BJ (cell line): ENCODE measurements at regions of chr2 and their contacts with region 1.

Region 1: DNA sequence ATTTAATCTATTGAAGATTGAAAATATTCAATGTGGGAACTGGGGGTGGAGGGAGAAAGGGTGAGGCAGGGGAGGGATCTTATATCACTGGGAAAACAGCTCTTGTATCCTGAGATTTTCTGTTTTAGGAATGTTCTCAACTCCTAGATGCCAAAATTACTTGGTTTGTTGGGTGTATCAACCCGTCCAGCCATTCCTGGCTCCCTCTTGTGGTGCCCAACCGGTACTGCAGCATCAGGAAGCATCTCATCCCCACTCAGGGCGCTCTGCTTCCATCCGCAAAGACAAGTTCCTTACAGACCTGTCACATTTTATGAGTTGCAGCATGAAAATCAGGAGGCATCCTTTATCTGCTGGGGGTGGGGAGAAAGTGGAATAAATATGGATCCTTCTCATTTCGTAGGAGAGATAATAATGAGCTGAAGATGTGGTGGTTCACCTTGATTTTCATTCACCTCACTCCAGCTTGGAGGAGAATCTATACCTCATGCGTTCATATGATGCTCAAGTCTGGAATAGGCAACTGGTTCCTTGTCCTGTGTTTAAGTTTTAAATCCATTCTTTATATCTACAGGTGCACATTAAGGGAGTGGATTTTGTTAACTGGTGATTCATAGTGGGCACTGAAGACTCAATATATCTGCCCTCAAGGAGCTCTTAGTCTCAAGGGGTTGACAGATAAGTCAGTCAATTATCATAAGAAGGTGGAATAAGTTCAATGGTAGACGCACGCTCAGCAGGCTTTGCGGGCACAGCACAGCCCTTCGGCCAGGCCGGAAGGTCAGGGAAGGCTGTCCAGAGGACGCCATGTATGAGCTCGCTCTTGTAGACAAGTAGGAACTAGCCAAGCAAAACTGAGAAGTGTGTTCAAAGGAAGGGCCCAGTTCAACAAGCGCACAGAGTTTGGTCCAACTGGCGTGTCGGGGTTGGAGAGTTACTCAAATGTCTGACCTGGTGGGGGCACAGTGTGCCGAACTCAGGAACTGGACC is 127.3 kb downstream of the RNF144A start:
- DNase-seq: no peak
- H3K4me3 ChIP-seq: no peak overlapping the region
- H3K27me3 ChIP-seq: no peaks in the 10 kb centered on the region
- CTCF ChIP-seq: peak; percentile 94

Region 2: GRCh38 chr2:6880200-6880733 is 164.3 kb before region 1 on chr2:
- CTCF ChIA-PET with region 1: no interaction called
- POLR2A ChIA-PET with region 1: no interaction called
- DNase-seq: no peak
- H3K4me3 ChIP-seq: no peak overlapping the region
- H3K27me3 ChIP-seq: peaks cover 1% of the 10 kb centered on the region; the same call in 1 of the 2 replicates
- CTCF ChIP-seq: no peak

Region 3: GRCh38 chr2:6896930-6897759 is 147.4 kb before region 1 on chr2:
- CTCF ChIA-PET with region 1: interaction called, 16 read pairs
- POLR2A ChIA-PET with region 1: no interaction called
- DNase-seq: no peak
- H3K4me3 ChIP-seq: no peak overlapping the region
- H3K27me3 ChIP-seq: no peaks in the 10 kb centered on the region
- CTCF ChIP-seq: peak; percentile 47

Region 4: GRCh38 chr2:7031547-7032245 is 12.9 kb before region 1 on chr2:
- CTCF ChIA-PET with region 1: interaction called, 11 read pairs
- POLR2A ChIA-PET with region 1: no interaction called
- DNase-seq: no peak
- H3K4me3 ChIP-seq: no peak overlapping the region
- H3K27me3 ChIP-seq: no peaks in the 10 kb centered on the region
- CTCF ChIP-seq: no peak

Region 5: DNA sequence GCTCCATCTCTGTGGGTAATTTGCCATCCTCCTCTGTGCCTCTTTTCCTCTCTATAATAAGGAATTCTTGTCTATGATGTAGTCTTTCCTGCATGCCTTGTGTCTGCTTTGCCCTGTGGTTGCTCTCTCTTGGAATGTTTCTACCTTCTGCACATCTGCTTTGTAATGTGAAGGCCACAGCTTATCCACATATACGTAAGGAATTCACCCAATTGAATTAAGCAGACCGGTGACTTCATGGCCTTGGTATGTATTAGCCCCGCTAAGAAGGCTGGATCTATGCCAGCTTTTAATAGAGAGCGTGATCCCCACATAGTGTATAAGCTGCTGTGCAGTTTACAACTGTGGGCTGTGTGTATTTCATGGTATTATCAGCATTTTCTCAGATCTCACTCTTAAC is 147.4 kb after region 1 on chr2:
- CTCF ChIA-PET with region 1: no interaction called
- POLR2A ChIA-PET with region 1: no interaction called
- DNase-seq: peak; percentile 66
- H3K4me3 ChIP-seq: no peak overlapping the region
- H3K27me3 ChIP-seq: no peaks in the 10 kb centered on the region
- CTCF ChIP-seq: no peak